ENCODE measurements at regions of chr3 and their contacts with region 1.

Region 1: DNA sequence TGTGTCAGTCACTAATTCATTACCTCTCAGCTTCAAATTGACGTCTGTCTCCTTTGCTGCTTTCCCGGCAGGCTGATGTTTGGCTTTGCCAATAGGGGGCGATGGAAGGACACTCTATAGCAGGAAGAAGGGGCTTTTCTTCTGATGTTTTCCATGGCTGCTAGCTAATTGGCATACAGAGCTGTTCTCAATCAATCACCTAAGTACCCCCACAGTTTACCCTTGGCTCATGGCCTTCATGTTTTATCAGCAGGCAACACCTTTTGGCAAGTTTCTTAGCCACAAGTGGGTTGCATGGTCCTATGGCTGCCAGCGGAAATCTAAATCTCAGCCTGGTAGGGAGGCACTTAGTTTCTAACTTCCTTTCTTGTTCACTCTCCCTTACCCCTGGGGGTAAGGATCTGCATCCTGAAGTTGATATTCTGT is 45.0 kb downstream of the ESYT3 start:
- DNase-seq: peak; percentile 71
- ATAC-seq: peak; percentile 91
- H3K4me3 Mint-ChIP-seq: no peak overlapping the region
- H3K27ac Mint-ChIP-seq: no peak overlapping the region
- H3K4me1 Mint-ChIP-seq: peaks cover 4% of the 10 kb centered on the region
- H3K27me3 Mint-ChIP-seq: no peaks in the 10 kb centered on the region; the same call in 1 of the 2 replicates
- CTCF ChIP-seq: peak; percentile 57

Region 2: DNA sequence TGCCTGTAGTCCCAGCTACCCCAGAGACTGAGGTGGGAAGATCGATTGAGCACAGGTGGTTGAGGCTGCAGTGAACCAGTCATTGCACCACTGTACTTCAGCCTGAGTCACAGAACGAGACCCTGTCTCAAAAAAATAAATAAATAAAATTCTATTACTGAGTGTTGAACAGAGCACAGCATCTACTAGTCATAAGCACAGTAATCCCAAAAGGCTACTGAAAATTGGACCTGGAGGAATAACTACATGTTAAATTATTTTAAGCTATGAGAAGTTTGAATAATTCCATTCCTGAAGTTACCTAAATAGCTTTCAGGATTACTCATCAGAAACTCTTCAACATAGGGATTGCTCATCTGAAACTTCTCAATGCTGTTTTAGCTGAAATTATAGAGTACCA is 248.9 kb before region 1 on chr3:
- CTCF ChIA-PET with region 1: no interaction called
- POLR2A ChIA-PET with region 1: no interaction called
- DNase-seq: no peak
- ATAC-seq: no peak
- H3K4me3 Mint-ChIP-seq: no peak overlapping the region
- H3K27ac Mint-ChIP-seq: no peak overlapping the region
- H3K4me1 Mint-ChIP-seq: no peaks in the 10 kb centered on the region
- H3K27me3 Mint-ChIP-seq: no peaks in the 10 kb centered on the region
- CTCF ChIP-seq: no peak

Region 3: DNA sequence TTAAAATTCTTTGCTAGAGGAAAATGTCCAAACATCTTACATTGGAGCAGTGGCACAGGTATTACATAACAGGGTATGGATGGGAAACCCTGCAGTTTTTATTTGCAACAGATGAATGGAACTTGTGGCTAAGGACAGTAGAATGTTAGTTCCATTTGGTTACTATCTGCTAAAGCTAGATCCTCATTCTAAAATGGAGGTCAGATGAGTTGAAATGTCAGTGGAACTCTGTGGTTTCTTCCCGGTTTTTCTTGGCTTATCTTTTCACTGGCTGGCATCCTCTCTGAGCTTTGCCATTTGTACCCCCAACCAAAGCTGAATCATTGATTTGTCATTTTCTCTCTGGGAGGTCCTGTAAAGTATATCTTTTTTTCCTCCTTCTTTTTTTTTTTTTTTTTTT is 223.4 kb before region 1 on chr3:
- CTCF ChIA-PET with region 1: no interaction called
- POLR2A ChIA-PET with region 1: no interaction called
- DNase-seq: no peak
- ATAC-seq: no peak
- H3K4me3 Mint-ChIP-seq: no peak overlapping the region
- H3K27ac Mint-ChIP-seq: no peak overlapping the region
- H3K4me1 Mint-ChIP-seq: no peaks in the 10 kb centered on the region
- H3K27me3 Mint-ChIP-seq: no peaks in the 10 kb centered on the region
- CTCF ChIP-seq: no peak

Region 4: GRCh38 chr3:138434276-138434874 is 45.1 kb before region 1 on chr3 and contains the start of gene ESYT3:
- CTCF ChIA-PET with region 1: interaction called, 14 read pairs
- POLR2A ChIA-PET with region 1: no interaction called
- DNase-seq: peak; percentile 86
- ATAC-seq: peak; percentile 89
- H3K4me3 Mint-ChIP-seq: peak within 1 kb of the TSS; percentile 71
- H3K27ac Mint-ChIP-seq: no peak within 1 kb of the TSS
- H3K4me1 Mint-ChIP-seq: peaks cover 9% of the 10 kb centered on the region
- H3K27me3 Mint-ChIP-seq: peaks cover 75% of the 10 kb centered on the region
- CTCF ChIP-seq: no peak
- total RNA-seq, gene ESYT3: 4.4 to 6.4 TPM (median 5.7 TPM) in 3 replicates

Region 5: GRCh38 chr3:138468886-138469285 is 10.6 kb before region 1 on chr3:
- CTCF ChIA-PET with region 1: interaction called, 26 read pairs
- POLR2A ChIA-PET with region 1: no interaction called
- DNase-seq: no peak
- ATAC-seq: no peak
- H3K4me3 Mint-ChIP-seq: no peak overlapping the region
- H3K27ac Mint-ChIP-seq: no peak overlapping the region
- H3K4me1 Mint-ChIP-seq: peaks cover 6% of the 10 kb centered on the region
- H3K27me3 Mint-ChIP-seq: no peaks in the 10 kb centered on the region
- CTCF ChIP-seq: no peak

Region 6: DNA sequence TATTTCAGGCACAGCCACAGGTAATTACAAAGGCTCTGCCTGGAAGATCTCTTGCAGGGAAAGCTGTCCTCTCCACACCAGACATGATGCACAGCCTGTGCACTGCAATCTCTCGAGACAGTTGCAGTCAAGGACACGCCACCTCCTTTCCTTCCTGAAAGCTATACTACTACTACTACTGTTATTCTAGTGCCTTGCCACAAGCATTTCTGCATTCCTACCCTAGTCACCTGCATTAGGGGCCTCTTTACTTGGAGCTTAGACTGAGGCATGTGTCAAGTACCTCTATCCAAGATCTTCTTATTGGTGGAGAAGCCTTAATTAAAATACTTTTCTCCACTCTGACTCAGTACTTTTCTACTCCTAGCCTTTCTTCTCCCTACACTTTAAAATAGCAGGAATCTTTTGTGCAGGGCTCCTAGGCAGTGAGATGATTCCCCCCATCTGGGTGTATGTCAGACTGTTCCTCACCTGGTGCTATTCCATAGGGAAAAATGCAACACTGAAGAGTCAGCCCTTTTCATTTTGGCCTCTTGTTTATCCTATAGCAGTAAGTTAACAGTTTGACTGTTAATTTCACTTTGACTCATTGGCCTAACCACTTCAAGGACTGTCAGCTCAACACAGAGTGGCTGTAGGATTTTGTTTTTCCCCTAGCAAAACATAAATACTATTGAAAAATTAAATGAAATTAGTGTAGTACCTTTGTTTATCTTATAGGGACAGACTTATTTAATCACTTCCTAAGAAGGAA is 33.8 kb after region 1 on chr3:
- CTCF ChIA-PET with region 1: interaction called, 10 read pairs
- POLR2A ChIA-PET with region 1: no interaction called
- DNase-seq: no peak
- ATAC-seq: peak; percentile 36; the same call in 1 of the 2 replicates
- H3K4me3 Mint-ChIP-seq: no peak overlapping the region
- H3K27ac Mint-ChIP-seq: no peak overlapping the region
- H3K4me1 Mint-ChIP-seq: peaks cover 10% of the 10 kb centered on the region
- H3K27me3 Mint-ChIP-seq: no peaks in the 10 kb centered on the region
- CTCF ChIP-seq: no peak

Region 7: GRCh38 chr3:138594150-138594934 is 114.9 kb after region 1 on chr3 and contains the start of gene CEP70:
- CTCF ChIA-PET with region 1: interaction called, 34 read pairs
- POLR2A ChIA-PET with region 1: interaction called, 3 read pairs
- DNase-seq: peak; percentile 95
- ATAC-seq: peak; percentile 93
- H3K4me3 Mint-ChIP-seq: peak within 1 kb of the TSS; percentile 96
- H3K27ac Mint-ChIP-seq: peak within 1 kb of the TSS; percentile 95
- H3K4me1 Mint-ChIP-seq: peaks cover 21% of the 10 kb centered on the region
- H3K27me3 Mint-ChIP-seq: no peaks in the 10 kb centered on the region
- CTCF ChIP-seq: peak; percentile 86
- total RNA-seq, gene CEP70: 27.2 to 34.8 TPM (median 33.5 TPM) in 3 replicates

Measured in WTC11 (cell line).